AG04449 (cell line): ENCODE measurements at regions of chr2 and their contacts with region 1.

Region 1: GRCh38 chr2:9205963-9206948 is at the start of gene ASAP2:
- DNase-seq: no peak
- H3K4me3 ChIP-seq: peak within 1 kb of the TSS; percentile 79
- CTCF ChIP-seq: peak; percentile 91

Region 2: DNA sequence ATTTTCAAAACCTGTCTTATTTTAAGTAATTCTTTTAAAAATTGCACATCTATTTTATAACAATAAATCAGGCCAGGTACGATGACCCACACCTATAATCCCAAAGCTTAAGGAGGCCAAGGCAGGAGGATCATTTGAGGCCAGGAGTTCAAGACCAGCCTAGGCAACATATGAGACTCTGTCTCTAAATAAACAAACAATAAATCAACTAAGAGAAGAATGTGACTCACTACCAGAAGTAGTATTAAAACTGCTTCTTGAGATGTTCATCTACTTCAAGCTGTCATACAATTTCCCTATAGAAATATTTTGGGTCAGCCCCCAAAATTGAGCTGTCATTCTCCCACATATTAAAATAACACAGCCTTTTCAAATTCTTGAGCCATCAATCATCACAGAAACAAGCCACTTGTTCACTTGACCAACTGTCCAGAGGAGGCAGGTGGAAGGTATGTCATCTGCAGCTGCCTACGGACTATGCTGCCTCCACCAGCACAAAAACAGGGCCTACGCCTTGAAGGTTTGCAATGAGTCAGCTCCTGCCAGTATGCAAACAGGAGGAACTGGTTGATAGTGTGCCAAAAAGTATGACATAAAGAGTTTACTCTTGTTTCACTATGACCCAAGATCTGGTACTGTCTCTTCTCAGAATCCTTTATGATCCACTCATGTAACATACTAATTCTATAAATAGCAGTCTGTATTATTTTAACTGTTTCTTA is 402.4 kb before region 1 on chr2:
- CTCF ChIA-PET with region 1: no interaction called
- POLR2A ChIA-PET with region 1: no interaction called
- DNase-seq: peak; percentile 70
- H3K4me3 ChIP-seq: no peak overlapping the region
- CTCF ChIP-seq: no peak

Region 3: DNA sequence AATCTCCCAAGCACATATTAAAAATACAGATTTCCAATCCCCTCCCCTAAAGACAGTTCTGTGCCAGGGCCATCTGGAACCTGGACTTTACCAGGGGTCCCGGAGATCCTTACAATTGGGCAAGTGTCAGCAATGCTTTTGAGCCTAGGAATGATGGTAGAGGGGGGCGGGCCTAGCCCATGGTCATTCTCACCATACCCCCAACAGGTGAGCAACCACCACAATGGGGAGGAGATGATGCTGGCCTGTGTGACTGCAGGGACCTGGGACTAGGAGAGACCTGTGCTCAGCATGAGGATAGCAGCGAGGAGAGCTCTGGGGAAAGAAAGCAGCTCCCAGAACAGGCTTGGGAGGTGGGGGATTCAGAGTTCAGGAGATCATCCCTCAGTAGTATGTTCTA is 13.5 kb before region 1 on chr2:
- CTCF ChIA-PET with region 1: interaction called, 12 read pairs
- POLR2A ChIA-PET with region 1: interaction called, 9 read pairs
- DNase-seq: no peak
- H3K4me3 ChIP-seq: no peak overlapping the region
- CTCF ChIP-seq: no peak

Region 4: GRCh38 chr2:9217838-9218770 is 11.8 kb after region 1 on chr2:
- CTCF ChIA-PET with region 1: interaction called, 18 read pairs
- POLR2A ChIA-PET with region 1: no interaction called
- DNase-seq: no peak
- H3K4me3 ChIP-seq: no peak overlapping the region
- CTCF ChIP-seq: no peak

Region 5: GRCh38 chr2:9226458-9227380 is 20.5 kb after region 1 on chr2:
- CTCF ChIA-PET with region 1: interaction called, 18 read pairs
- POLR2A ChIA-PET with region 1: no interaction called
- DNase-seq: no peak
- H3K4me3 ChIP-seq: no peak overlapping the region
- CTCF ChIP-seq: no peak

Region 6: GRCh38 chr2:9240751-9241150 is 34.5 kb after region 1 on chr2:
- CTCF ChIA-PET with region 1: no interaction called
- POLR2A ChIA-PET with region 1: no interaction called
- DNase-seq: no peak
- H3K4me3 ChIP-seq: no peak overlapping the region
- CTCF ChIP-seq: no peak

Region 7: GRCh38 chr2:9333591-9334171 is 127.4 kb after region 1 on chr2:
- CTCF ChIA-PET with region 1: interaction called, 25 read pairs
- POLR2A ChIA-PET with region 1: no interaction called
- DNase-seq: peak; percentile 46
- H3K4me3 ChIP-seq: no peak overlapping the region
- CTCF ChIP-seq: peak; percentile 79

Region 8: GRCh38 chr2:9373077-9373875 is 167.0 kb after region 1 on chr2:
- CTCF ChIA-PET with region 1: interaction called, 17 read pairs
- POLR2A ChIA-PET with region 1: no interaction called
- DNase-seq: no peak
- H3K4me3 ChIP-seq: no peak overlapping the region
- CTCF ChIP-seq: no peak